ENCODE measurements at regions of chr3 and their contacts with region 1.

Region 1: DNA sequence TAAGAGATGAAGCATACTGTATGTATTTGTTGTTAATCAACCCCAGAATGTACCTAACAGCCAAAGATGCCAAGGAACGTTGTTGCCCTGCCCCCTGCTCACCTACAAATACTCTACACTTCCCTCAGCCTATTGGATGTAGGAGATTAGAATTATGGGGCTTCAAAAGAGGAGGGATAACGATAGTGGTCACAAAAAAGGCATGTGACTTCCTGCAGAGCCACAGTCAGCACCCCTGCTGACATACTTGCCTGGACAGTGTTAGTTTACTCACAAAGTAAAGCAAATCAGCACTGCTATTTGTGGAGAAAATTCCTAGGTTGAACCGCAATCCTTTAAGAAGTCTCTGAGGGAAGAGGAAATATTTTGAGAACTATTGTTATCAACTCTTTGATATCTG is 37.9 kb downstream of the PARP15 start:
- DNase-seq: no peak
- H3K4me3 ChIP-seq: no peak overlapping the region
- H3K27ac ChIP-seq: no peak overlapping the region
- H3K4me1 ChIP-seq: no peaks in the 10 kb centered on the region
- H3K27me3 ChIP-seq: peaks cover 0 to 3% of the 10 kb centered on the region in 2 donors
- CTCF ChIP-seq: no peak

Region 2: GRCh38 chr3:122640437-122640999 is 25.2 kb after region 1 on chr3:
- intact Hi-C with region 1: loop called (anchors 2 kb)
- DNase-seq: no peak
- H3K4me3 ChIP-seq: no peak overlapping the region
- H3K27ac ChIP-seq: no peak overlapping the region
- H3K4me1 ChIP-seq: no peaks in the 10 kb centered on the region
- H3K27me3 ChIP-seq: no peaks in the 10 kb centered on the region
- CTCF ChIP-seq: no peak